Endothelial cell of umbilical vein (primary cell): ENCODE measurements at regions of chr10 and their contacts with region 1.

Region 1: DNA sequence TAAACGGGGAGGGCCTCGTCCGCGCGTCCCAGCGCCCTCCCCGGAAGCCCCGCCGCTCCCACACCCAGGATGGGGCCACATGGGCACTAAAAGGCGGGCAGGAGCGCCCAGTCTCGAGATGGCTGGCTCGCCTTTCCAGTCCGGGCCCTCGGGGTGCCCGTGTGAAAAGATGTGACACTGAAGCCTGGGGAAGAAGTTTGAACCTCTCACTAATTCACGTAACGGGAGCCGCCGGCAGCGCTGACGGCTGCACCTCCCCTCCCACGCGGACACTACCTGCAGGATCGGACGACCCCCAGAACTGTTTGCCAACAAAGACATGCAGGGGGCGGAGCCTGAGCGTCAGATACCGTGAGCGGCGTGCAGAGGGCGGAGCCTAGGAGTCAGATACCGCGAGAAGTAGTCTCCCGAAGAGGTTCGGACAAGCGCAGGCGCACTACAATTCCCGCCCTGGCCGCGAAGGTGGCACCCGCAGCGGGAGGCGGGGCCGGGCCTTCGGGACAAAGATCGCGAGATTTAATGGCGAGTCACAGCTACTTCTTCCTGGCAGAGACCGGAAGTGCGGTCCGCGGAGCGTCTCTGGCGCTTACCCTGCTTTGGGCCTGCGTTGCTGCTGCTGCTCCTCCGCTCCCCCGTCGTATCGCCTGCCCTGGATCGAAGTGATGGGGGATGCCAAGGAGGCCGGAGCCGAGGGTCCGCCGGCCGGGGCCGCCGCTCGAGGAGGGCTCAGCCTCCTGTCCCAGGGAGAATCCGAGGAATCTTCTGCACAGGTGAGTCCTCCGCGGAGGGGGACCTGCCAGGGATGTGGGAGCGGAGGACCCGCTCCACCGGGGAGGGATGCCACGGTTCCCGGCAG is at the start of gene EDRF1:
- DNase-seq: peak; percentile 100
- H3K4me3 ChIP-seq: peak within 1 kb of the TSS; percentile 65 to 98 (median 93)
- H3K27ac ChIP-seq: peak within 1 kb of the TSS; percentile 67
- H3K4me1 ChIP-seq: peaks cover 6% of the 10 kb centered on the region
- H3K27me3 ChIP-seq: no peaks in the 10 kb centered on the region
- CTCF ChIP-seq: no peak
- POLR2A ChIP-seq: peak; percentile 97
- total RNA-seq, gene EDRF1: 24.7 and 27.8 TPM in 2 replicates

Region 2: DNA sequence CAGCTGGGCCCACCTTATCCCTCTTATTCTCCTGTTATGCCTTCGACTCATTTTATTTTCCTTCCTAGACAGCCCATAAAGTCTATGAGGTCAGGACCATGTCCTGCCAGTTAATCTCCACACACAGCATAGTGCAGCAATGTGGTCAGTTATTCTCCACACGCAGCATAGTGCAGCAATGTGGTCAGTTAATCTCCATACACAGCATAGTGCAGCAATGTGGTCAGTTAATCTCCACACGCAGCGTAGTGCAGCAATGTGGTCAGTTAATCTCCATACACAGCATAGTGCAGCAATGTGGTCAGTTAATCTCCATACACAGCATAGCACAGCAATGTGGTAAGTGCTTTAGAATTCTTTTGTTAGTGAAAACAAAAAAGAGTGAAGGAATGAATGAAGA is 114.2 kb before region 1 on chr10:
- CTCF ChIA-PET with region 1: no interaction called
- POLR2A ChIA-PET with region 1: no interaction called
- dilution Hi-C with region 1: no loop called
- intact Hi-C with region 1: loop called (anchors 2 kb)
- DNase-seq: peak; percentile 21
- H3K4me3 ChIP-seq: no peak overlapping the region
- H3K27ac ChIP-seq: no peak overlapping the region
- H3K4me1 ChIP-seq: peaks cover 28% of the 10 kb centered on the region
- H3K27me3 ChIP-seq: peaks cover 0 to 2% of the 10 kb centered on the region in 2 experiments
- CTCF ChIP-seq: no peak
- POLR2A ChIP-seq: no peak

Region 3: DNA sequence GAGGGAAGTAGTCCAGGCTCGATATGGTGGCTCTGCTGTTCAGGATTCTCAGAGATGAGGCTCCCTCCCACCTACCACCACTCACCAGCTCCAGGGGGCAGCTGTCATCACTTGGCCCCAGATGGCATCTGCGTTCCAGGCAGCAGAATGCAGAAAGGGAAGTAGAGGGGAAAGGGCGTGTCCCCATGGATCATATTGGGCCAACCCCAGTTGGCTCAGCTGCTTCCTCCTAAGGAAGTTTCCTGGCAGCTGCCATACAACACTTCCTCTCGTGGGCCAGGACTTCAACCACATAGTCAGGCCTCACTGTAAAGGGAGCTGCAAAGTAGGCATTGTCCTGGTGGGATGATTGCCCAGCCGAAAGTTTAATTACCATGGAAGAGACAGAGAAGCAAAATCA is 34.8 kb before region 1 on chr10:
- CTCF ChIA-PET with region 1: no interaction called
- POLR2A ChIA-PET with region 1: no interaction called
- dilution Hi-C with region 1: no loop called
- intact Hi-C with region 1: loop called (anchors 2 kb)
- DNase-seq: no peak
- H3K4me3 ChIP-seq: no peak overlapping the region
- H3K27ac ChIP-seq: no peak overlapping the region
- H3K4me1 ChIP-seq: peaks cover 10% of the 10 kb centered on the region
- H3K27me3 ChIP-seq: no peaks in the 10 kb centered on the region
- CTCF ChIP-seq: no peak
- POLR2A ChIP-seq: no peak

Region 4: DNA sequence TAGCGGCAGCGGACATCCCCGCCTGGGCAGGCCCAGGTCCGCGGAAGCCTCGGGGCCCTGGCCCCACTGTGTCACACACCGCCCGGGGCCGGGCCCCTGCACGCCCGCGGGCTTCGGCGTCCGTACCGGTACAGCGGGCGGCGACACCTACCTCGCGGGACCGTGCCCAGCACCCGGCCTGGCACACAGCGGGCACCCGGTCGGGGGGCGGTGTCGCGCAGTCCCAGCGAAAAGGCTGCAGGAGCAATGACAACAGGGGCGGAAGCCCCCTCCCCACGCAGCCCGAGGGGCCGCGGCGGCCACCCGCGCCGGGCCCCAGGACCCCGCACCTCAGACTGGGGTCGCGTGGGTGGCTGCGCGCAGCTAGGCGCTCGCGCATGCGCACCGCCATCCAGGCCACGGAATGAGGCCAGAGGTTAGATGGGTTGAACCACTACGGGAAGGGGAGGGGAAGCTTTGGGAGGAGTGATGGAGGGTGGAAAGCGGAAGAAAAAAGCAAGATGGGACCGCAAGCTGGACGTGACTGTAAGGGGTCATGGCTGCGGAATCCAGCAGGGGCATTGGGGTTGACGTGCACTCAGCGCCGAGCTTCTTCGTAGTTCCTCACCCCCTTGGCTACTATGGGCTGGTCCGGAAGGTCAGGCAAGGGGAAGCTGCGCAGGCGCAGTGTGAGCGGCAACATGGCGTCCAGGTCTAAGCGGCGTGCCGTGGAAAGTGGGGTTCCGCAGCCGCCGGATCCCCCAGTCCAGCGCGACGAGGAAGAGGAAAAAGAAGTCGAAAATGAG is 103.7 kb after region 1 on chr10 and contains the starts of genes BCCIP and UROS:
- CTCF ChIA-PET with region 1: no interaction called
- POLR2A ChIA-PET with region 1: no interaction called
- dilution Hi-C with region 1: no loop called
- intact Hi-C with region 1: loop called (anchors 1 kb)
- DNase-seq: peak; percentile 90
- H3K4me3 ChIP-seq: peak within 1 kb of the TSS; percentile 78 to 83 (median 79)
- H3K27ac ChIP-seq: peak within 1 kb of the TSS; percentile 89
- H3K4me1 ChIP-seq: peaks cover 18% of the 10 kb centered on the region
- H3K27me3 ChIP-seq: no peaks in the 10 kb centered on the region
- CTCF ChIP-seq: no peak
- POLR2A ChIP-seq: no peak
- total RNA-seq, gene BCCIP: 61.3 and 73.5 TPM in 2 replicates
- total RNA-seq, gene UROS: 38.4 and 40.2 TPM in 2 replicates